ENCODE measurements at regions of chr19 and their contacts with region 1.

Region 1: DNA sequence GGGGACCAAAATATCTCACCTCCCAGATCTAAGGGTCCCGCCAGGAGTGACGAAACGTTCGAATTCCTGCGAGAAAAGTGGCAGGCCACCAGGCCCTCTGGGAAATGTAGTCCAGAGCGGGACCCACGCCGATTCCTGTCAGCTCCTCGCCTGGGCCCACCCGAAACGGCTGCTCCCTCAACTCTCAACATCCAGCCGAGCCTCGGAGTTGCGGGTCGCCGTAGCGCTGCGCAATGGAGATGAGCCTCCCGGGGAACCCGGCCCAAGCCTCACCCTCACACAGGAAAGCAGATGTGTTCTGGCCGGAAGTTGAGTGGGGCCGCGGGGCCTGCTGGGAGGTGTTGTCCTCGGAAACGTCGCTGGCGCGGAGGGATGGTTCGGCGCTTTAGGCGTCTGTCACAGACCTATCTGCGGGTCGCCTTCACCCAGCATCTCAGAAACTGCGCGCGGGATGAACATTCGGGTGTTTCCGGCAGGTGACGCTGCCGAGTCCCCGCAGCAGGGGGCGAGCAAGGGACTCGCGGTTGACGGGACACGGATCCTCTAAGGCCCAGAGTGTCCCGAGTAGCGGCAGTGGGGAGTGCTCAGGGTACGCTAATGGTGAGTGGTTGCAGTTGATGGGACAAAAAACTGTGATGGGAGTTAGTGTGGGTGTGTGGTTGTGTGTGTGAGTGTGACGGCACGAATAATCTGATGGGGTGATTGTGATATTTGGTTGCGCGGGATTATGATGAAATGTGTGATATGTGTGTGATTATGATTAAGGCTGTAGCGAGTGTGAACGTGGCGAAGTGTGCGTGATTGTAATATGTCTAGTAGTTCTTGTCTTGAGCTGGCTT is at the starts of genes ZNF568 and ZNF829:
- DNase-seq: peak; percentile 92 to 98 (median 95)
- H3K4me3 ChIP-seq: peak within 1 kb of the TSS; percentile 60 to 88
- H3K4me3 Mint-ChIP-seq: peak within 1 kb of the TSS; percentile 84 to 97 (median 94)
- H3K27ac ChIP-seq: peak within 1 kb of the TSS; percentile 93
- H3K27ac Mint-ChIP-seq: peak within 1 kb of the TSS; percentile 81 to 97 (median 96)
- H3K4me1 ChIP-seq: peaks cover 14% of the 10 kb centered on the region
- H3K4me1 Mint-ChIP-seq: peaks cover 19 to 39% (median 28%) of the 10 kb centered on the region in 4 donors
- H3K27me3 ChIP-seq: no peaks in the 10 kb centered on the region
- H3K27me3 Mint-ChIP-seq: no peaks in the 10 kb centered on the region
- total RNA-seq, gene ZNF568: 18.8 to 20.3 TPM
- total RNA-seq, gene ZNF829: 8.5 to 9.8 TPM

Region 2: GRCh38 chr19:36378625-36379509 is 537.3 kb before region 1 on chr19 and contains the start of gene ZFP14:
- CTCF ChIA-PET with region 1: no interaction called
- POLR2A ChIA-PET with region 1: no interaction called
- intact Hi-C with region 1: loop called (anchors 1 kb)
- DNase-seq: peak; percentile 92 to 96 (median 95)
- H3K4me3 ChIP-seq: peak within 1 kb of the TSS; percentile 76 to 87
- H3K4me3 Mint-ChIP-seq: peak within 1 kb of the TSS; percentile 87 to 96 (median 94)
- H3K27ac ChIP-seq: peak within 1 kb of the TSS; percentile 76
- H3K27ac Mint-ChIP-seq: peak within 1 kb of the TSS; percentile 81 to 97 (median 93)
- H3K4me1 ChIP-seq: peaks cover 18% of the 10 kb centered on the region
- H3K4me1 Mint-ChIP-seq: peaks cover 13 to 34% (median 18%) of the 10 kb centered on the region in 4 donors
- H3K27me3 ChIP-seq: no peaks in the 10 kb centered on the region
- H3K27me3 Mint-ChIP-seq: no peaks in the 10 kb centered on the region
- total RNA-seq, gene ZFP14: 20.7 to 21.2 TPM

Region 3: DNA sequence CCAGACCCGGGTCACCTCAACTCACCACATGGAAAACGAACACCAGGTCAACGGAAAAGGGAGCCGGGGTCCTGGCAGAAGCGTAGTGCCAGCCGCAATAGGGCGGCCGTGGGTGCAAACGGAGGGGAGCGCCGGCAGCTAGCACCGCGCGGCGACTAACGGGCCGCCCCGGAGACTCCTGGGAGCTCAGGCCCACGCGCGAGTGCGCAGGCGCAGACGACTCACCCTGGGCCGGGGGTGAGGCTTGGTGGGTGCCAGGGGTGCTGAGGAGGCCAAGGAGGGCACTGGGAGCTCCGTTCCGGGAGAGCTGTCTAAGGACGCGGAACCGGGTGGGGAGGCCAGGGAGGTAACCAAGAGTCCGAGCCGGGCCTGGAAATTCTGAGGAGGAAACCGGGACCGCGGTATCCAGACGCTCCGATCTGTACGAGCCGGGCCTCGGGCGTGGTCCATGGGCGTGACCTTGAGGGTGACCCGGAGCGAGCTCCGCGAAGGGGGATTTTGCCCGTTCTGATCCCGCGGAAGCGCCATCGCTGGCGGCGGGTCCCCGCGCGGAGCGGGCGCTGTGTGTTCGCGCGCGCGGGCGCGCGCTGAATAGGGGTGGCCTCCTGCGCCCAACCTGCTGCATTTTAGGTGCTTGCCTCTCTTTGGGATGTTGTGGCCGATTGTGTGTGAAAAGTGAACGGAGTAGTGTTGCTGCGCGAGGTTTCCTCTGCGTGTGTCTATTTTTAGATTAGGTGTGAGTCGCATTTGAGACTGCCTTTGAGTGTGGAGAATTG is 310.9 kb before region 1 on chr19 and contains the start of gene ZNF382:
- CTCF ChIA-PET with region 1: no interaction called
- POLR2A ChIA-PET with region 1: no interaction called
- intact Hi-C with region 1: loop called (anchors 1 kb)
- DNase-seq: peak; percentile 85 to 89 (median 86)
- H3K4me3 ChIP-seq: peak within 1 kb of the TSS; percentile 32 to 85
- H3K4me3 Mint-ChIP-seq: peak within 1 kb of the TSS; percentile 90 to 99 (median 96)
- H3K27ac ChIP-seq: peak within 1 kb of the TSS; percentile 91
- H3K27ac Mint-ChIP-seq: peak within 1 kb of the TSS; percentile 82 to 98 (median 92)
- H3K4me1 ChIP-seq: peaks cover 16% of the 10 kb centered on the region
- H3K4me1 Mint-ChIP-seq: peaks cover 17 to 33% (median 23%) of the 10 kb centered on the region in 4 donors
- H3K27me3 ChIP-seq: no peaks in the 10 kb centered on the region
- H3K27me3 Mint-ChIP-seq: peaks cover 0 to 1% of the 10 kb centered on the region in 2 donors
- total RNA-seq, gene ZNF382: 21.1 to 21.9 TPM

Region 4: GRCh38 chr19:36687214-36688056 is 228.8 kb before region 1 on chr19 and contains the start of gene ZNF567:
- CTCF ChIA-PET with region 1: no interaction called
- POLR2A ChIA-PET with region 1: interaction called, 3 read pairs
- intact Hi-C with region 1: loop called (anchors 1 kb)
- DNase-seq: peak; percentile 94 to 96 (median 95)
- H3K4me3 ChIP-seq: peak within 1 kb of the TSS; percentile 62 to 80
- H3K4me3 Mint-ChIP-seq: peak within 1 kb of the TSS; percentile 97 to 100 (median 99)
- H3K27ac ChIP-seq: peak within 1 kb of the TSS; percentile 75
- H3K27ac Mint-ChIP-seq: peak within 1 kb of the TSS; percentile 95 to 99 (median 97)
- H3K4me1 ChIP-seq: peaks cover 22% of the 10 kb centered on the region
- H3K4me1 Mint-ChIP-seq: peaks cover 22 to 49% (median 30%) of the 10 kb centered on the region in 4 donors
- H3K27me3 ChIP-seq: no peaks in the 10 kb centered on the region
- H3K27me3 Mint-ChIP-seq: no peaks in the 10 kb centered on the region
- total RNA-seq, gene ZNF567: 17.0 to 19.8 TPM

Region 5: GRCh38 chr19:36837906-36838783 is 78.1 kb before region 1 on chr19 and contains the start of gene ZNF790:
- CTCF ChIA-PET with region 1: no interaction called
- POLR2A ChIA-PET with region 1: interaction called, 10 read pairs
- intact Hi-C with region 1: loop called (anchors 1 kb)
- DNase-seq: peak; percentile 88 to 94 (median 91)
- H3K4me3 ChIP-seq: peak within 1 kb of the TSS; percentile 48 to 97
- H3K4me3 Mint-ChIP-seq: peak within 1 kb of the TSS in 4 of 8 donors; percentile 31 to 71 (median 44)
- H3K27ac ChIP-seq: peak within 1 kb of the TSS; percentile 73
- H3K27ac Mint-ChIP-seq: peak within 1 kb of the TSS in 2 of 7 donors; percentile 45 to 54
- H3K4me1 ChIP-seq: peaks cover 18% of the 10 kb centered on the region
- H3K4me1 Mint-ChIP-seq: peaks cover 0 to 13% (median 5%) of the 10 kb centered on the region in 4 donors
- H3K27me3 ChIP-seq: no peaks in the 10 kb centered on the region
- H3K27me3 Mint-ChIP-seq: no peaks in the 10 kb centered on the region
- total RNA-seq, gene ZNF790: 12.4 to 13.4 TPM

Region 6: DNA sequence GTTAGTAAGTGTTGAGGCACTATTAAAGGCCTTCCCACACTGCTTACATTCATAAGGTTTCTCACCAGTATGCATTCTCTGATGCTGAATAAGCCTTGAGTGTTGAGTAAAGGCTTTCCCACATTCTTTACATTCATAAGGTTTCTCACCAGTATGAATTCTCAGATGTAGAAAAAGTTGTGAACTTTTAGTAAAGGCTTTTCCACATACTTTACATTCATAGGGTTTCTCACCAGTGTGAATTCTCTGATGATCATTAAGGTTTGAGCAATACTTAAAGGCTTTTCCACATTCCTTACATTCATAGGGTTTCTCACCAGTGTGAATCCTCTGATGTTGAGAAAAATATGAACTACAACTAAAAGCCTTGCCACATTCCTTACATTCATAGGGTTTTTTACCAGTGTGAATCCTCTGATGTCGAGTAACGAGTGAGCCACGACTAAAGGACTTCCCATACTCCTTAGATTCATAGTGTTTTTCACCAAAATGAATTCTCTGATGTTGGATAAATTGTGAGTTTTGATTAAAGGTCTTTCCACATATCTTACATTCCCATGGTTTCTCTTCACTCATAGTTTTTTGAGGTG is 24.3 kb before region 1 on chr19:
- CTCF ChIA-PET with region 1: no interaction called
- POLR2A ChIA-PET with region 1: no interaction called
- intact Hi-C with region 1: no loop called
- DNase-seq: no peak
- H3K4me3 ChIP-seq: peak overlapping the region in 1 of 2 donors; percentile 10
- H3K4me3 Mint-ChIP-seq: no peak overlapping the region
- H3K27ac ChIP-seq: no peak overlapping the region
- H3K27ac Mint-ChIP-seq: no peak overlapping the region
- H3K4me1 ChIP-seq: no peaks in the 10 kb centered on the region
- H3K4me1 Mint-ChIP-seq: peaks cover 0 to 3% (median 0%) of the 10 kb centered on the region in 4 donors
- H3K27me3 ChIP-seq: no peaks in the 10 kb centered on the region
- H3K27me3 Mint-ChIP-seq: no peaks in the 10 kb centered on the region

Region 7: DNA sequence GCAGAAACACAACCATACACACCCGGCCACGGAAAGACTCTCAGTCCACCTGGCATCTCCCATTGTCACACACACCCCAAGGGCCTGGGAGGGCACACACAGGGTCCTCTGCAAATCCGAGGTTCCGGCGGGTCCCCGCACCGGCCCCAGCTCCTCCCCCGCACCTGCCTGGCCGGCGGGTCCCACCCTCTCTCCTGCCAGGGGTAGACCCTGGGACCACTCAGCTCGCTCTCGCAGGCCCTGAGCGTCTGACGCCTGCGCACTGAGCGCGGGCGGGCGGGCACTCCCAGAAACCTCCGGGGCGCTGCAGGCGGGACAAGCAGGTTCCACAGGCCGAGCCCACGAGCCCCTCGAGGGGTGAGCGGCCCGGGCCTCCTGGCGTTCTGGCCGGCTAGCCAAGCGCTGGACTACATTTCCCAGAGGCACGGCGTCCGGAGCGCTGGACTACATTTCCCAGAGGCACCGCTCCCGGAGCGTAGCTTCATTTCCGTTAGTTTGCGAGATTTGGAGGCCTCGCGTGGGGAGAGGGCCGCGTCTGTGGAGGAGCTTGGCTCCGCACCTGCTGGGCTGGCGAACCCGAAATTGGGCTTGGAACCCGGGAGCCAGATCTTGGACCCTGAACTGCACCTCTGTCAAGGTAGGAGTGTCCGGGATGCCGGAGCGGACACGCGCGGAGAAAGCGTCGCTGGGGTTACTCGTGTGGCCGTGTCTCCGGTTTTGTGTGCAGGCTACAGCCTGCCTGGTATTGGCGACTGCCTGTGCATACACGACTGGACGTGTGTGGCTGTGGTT is 161.9 kb after region 1 on chr19 and contains the start of gene ZNF420:
- CTCF ChIA-PET with region 1: no interaction called
- POLR2A ChIA-PET with region 1: interaction called, 3 read pairs
- intact Hi-C with region 1: loop called (anchors 1 kb)
- DNase-seq: peak; percentile 85 to 92 (median 87)
- H3K4me3 ChIP-seq: peak within 1 kb of the TSS; percentile 61 to 88
- H3K4me3 Mint-ChIP-seq: peak within 1 kb of the TSS; percentile 90 to 100 (median 98)
- H3K27ac ChIP-seq: peak within 1 kb of the TSS; percentile 73
- H3K27ac Mint-ChIP-seq: peak within 1 kb of the TSS; percentile 85 to 99 (median 95)
- H3K4me1 ChIP-seq: peaks cover 23% of the 10 kb centered on the region
- H3K4me1 Mint-ChIP-seq: peaks cover 22 to 43% (median 27%) of the 10 kb centered on the region in 4 donors
- H3K27me3 ChIP-seq: no peaks in the 10 kb centered on the region
- H3K27me3 Mint-ChIP-seq: no peaks in the 10 kb centered on the region
- total RNA-seq, gene ZNF420: 25.0 to 28.6 TPM

Measured in CD4-positive, alpha-beta memory T cell (primary cell).